ENCODE measurements at regions of chr9 and their contacts with region 1.

Region 1: DNA sequence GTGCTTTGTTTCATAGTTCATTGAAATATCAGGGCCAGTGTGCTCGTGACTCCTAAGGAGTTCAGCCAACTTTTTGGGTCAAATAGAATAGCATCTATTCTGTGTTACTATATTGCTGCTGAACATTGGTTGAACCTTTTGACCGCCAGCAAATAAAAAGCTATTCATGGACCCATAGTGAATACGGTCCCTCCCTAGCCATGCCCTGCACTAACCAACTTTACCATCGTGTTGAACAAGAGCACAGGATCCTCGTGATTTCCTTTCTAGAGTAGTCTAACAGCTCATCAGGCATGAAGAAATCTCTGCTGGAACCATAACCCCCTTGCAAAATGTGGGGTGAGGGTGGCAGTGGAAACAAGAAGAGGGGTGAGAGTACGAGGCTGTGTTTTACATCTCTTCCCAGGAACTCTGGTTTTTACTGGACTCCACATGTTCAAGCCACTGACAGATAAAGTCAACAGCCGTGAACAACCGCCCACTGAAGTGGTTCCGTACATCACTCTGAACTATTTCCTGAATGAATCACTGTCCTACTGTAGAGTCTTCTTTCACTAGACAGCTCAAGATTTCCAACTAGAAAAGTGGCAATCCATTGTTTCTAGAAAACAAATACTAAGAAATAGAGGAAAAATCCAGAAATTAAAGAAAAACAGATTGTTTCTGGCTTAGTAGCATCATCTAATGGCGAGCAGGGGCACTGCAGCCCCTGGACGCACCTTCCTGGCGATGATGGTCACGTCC is 70.1 kb upstream of the SPATA31E1 start:
- DNase-seq: no peak
- ATAC-seq: peak; percentile 58

Region 2: GRCh38 chr9:87678650-87679515 is 133.7 kb before region 1 on chr9:
- intact Hi-C with region 1: loop called (anchors 2 kb)
- DNase-seq: no peak
- ATAC-seq: peak; percentile 55

Measured in Right ventricle myocardium superior (tissue), 1 donor.